ENCODE measurements at regions of chr4 and their contacts with region 1.

Region 1: DNA sequence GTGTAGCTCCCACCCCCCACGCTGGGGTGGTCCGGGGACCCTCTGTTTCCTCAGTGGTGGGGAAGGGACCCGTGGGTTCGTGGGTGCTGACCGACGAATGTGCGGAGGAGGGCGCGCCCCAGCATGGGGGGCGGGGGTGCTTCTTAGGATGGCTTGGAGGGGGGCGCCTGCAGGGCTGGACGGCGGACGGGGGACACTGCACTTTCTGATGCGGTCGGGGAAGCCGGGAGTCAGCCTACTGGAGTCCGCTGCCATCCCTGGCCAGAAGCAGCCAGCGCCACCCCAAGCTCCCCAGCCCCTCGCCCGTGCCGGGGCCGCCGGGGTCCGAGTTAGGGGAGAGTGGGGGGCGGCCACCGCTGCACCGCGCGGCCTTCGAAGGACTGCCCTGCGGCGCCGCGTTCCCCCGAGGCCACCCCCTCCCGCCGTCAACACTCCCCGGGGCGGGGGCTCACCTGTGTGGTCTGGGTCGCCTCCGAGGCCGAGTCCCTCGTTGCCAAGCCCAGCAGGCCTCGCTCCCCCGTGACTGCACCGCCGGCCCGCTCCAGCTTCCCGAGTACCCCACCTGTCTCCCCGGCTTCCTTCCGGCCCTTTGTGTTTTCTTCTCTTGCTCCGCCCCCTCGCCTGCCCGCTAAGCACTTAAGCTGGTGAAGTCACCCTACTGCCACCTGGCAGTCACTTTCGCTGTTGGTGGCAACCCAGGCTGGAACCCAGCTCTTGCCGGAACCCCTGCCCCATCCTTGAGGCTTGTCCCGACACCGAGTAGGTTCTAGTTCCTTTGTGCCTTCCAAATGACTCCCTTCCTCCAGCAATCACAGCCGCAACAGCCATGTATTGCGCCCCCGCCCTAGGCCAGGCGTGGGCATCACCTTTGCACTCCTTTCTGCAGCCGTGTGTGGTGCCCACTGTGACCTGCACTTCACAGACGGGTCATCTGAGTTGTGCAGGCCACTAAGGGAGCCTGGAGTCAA is at the start of gene OCIAD2:
- DNase-seq: peak; percentile 59 to 88 (median 86)
- ATAC-seq: peak; percentile 97
- H3K4me3 ChIP-seq: peak within 1 kb of the TSS; percentile 80
- H3K4me3 Mint-ChIP-seq: peak within 1 kb of the TSS; percentile 93 to 99 (median 97)
- H3K27ac ChIP-seq: peak within 1 kb of the TSS; percentile 82
- H3K27ac Mint-ChIP-seq: peak within 1 kb of the TSS; percentile 89 to 99 (median 96)
- H3K4me1 ChIP-seq: peaks cover 18 to 33% of the 10 kb centered on the region in 2 donors
- H3K4me1 Mint-ChIP-seq: peaks cover 32 to 63% (median 52%) of the 10 kb centered on the region in 7 donors
- H3K27me3 ChIP-seq: no peaks in the 10 kb centered on the region
- H3K27me3 Mint-ChIP-seq: no peaks in the 10 kb centered on the region
- total RNA-seq, gene OCIAD2: 42.0 to 142 (median 97.5) TPM

Region 2: DNA sequence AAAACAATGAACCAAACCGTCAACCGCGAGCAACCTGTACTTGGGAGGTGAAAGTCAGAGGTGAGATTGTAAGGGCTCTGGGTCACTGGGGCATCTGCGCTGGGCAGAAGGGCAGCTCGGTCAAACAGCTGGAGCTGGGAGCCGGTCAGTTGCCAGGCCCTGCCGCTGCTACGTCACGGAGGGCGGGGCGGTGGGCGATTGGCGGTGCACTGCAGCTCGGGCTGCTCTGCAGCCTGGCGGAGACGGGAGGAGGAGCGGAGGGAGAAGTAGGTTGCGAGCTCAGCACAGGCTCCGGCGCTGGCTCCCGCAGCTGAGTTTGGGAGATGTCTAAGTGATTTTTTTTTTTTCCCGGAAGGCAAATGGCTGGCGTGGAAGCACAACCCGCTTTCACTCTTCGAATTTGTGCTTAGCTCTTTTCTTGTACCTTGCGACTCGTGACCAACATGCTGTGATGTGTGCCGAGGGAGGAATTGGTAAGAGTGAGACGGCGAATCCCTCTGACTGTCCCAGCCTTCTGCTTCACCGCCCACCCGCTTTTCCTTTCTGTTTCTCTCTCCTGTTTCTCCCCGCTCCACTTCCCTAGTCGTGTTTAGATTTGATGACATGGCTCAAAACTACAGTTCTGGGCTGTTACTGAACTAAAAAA is 1421.3 kb before region 1 on chr4 and contains the start of gene ATP10D:
- CTCF ChIA-PET with region 1: no interaction called
- POLR2A ChIA-PET with region 1: no interaction called
- intact Hi-C with region 1: loop called in 1 of 2 experiments (anchors 10 kb)
- DNase-seq: peak; percentile 56 to 77 (median 66)
- ATAC-seq: peak; percentile 97
- H3K4me3 ChIP-seq: peak within 1 kb of the TSS; percentile 75
- H3K4me3 Mint-ChIP-seq: peak within 1 kb of the TSS; percentile 87 to 98 (median 94)
- H3K27ac ChIP-seq: peak within 1 kb of the TSS; percentile 70
- H3K27ac Mint-ChIP-seq: peak within 1 kb of the TSS; percentile 78 to 97 (median 89)
- H3K4me1 ChIP-seq: peaks cover 7 to 9% of the 10 kb centered on the region in 2 donors
- H3K4me1 Mint-ChIP-seq: peaks cover 15 to 36% (median 26%) of the 10 kb centered on the region in 7 donors
- H3K27me3 ChIP-seq: no peaks in the 10 kb centered on the region
- H3K27me3 Mint-ChIP-seq: peaks cover 0 to 5% (median 0%) of the 10 kb centered on the region in 5 donors
- total RNA-seq, gene ATP10D: 3.3 to 29.0 (median 6.1) TPM

Region 3: DNA sequence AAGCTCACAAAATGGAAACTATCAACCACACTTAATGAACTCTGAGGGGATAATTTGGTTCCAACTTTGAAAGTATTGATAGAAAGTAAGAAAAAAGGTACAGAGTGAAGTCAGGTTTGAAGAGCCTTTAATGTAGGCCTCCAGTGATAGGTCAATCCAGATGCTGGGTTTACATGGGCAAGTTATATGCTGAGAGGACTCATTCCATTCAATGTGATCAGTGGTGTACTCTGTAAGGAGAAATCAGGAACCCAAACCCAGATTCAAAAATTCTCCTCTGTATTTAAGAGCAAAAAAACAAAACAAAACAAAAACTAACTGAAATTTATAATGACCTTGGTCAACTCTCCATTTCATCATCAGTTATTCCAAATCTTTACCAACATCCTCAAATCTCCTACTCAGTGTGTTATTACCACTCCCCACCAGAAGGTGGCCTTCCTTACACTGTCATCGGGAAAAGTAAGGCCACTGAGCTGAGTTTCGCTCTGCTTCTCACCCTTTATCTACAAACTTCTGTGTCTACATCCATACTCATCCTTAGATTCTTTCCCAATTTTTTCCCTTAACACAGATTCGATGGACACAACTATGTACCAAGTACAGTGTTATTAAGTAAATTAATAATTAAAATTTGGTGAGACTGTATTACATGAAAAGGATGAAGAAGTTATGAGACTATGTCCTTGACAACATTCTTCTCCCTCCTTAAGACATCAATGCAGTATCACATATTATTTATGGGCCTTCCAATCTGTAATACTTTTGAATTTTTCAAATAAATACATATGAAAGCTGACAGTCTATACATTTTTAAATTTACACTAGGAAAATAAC is 328.1 kb before region 1 on chr4:
- CTCF ChIA-PET with region 1: interaction called, 14 read pairs
- POLR2A ChIA-PET with region 1: interaction called, 3 read pairs
- intact Hi-C with region 1: loop called (anchors 1 kb)
- DNase-seq: peak in 8 of 9 donors; percentile 29 to 66 (median 50)
- ATAC-seq: peak; percentile 95
- H3K4me3 ChIP-seq: no peak overlapping the region
- H3K4me3 Mint-ChIP-seq: no peak overlapping the region
- H3K27ac ChIP-seq: no peak overlapping the region
- H3K27ac Mint-ChIP-seq: peak overlapping the region in 6 of 9 donors; percentile 28 to 79 (median 52)
- H3K4me1 ChIP-seq: no peaks in the 10 kb centered on the region
- H3K4me1 Mint-ChIP-seq: peaks cover 0 to 7% (median 0%) of the 10 kb centered on the region in 7 donors
- H3K27me3 ChIP-seq: no peaks in the 10 kb centered on the region
- H3K27me3 Mint-ChIP-seq: no peaks in the 10 kb centered on the region

Region 4: DNA sequence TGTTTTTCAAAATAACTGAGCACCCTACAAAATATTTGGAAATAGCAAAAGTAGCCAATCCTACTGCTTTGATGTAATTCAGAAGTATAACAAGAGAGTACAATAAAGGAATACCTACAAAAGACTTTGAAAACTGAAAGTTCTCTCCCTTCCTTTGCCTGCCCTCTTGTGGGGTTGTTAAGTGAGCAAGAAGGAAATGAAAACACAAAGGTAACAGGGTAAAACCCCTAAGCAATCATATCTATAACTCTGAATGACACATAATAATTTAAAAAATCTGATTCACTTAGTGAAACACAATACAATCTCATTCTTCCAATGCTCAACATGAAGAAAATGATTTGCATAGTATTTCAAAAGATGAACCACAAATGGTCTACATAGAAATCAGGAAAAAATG is 224.6 kb before region 1 on chr4:
- CTCF ChIA-PET with region 1: no interaction called
- POLR2A ChIA-PET with region 1: no interaction called
- intact Hi-C with region 1: loop called in 1 of 2 experiments (anchors 5 kb)
- DNase-seq: peak in 6 of 9 donors; percentile 4 to 43 (median 25)
- ATAC-seq: peak; percentile 70
- H3K4me3 ChIP-seq: no peak overlapping the region
- H3K4me3 Mint-ChIP-seq: peak overlapping the region in 1 of 10 donors; percentile 26
- H3K27ac ChIP-seq: no peak overlapping the region
- H3K27ac Mint-ChIP-seq: peak overlapping the region in 7 of 9 donors; percentile 35 to 86 (median 69)
- H3K4me1 ChIP-seq: peaks cover 4 to 9% of the 10 kb centered on the region in 2 donors
- H3K4me1 Mint-ChIP-seq: peaks cover 22 to 52% (median 45%) of the 10 kb centered on the region in 7 donors
- H3K27me3 ChIP-seq: no peaks in the 10 kb centered on the region
- H3K27me3 Mint-ChIP-seq: no peaks in the 10 kb centered on the region

Region 5: DNA sequence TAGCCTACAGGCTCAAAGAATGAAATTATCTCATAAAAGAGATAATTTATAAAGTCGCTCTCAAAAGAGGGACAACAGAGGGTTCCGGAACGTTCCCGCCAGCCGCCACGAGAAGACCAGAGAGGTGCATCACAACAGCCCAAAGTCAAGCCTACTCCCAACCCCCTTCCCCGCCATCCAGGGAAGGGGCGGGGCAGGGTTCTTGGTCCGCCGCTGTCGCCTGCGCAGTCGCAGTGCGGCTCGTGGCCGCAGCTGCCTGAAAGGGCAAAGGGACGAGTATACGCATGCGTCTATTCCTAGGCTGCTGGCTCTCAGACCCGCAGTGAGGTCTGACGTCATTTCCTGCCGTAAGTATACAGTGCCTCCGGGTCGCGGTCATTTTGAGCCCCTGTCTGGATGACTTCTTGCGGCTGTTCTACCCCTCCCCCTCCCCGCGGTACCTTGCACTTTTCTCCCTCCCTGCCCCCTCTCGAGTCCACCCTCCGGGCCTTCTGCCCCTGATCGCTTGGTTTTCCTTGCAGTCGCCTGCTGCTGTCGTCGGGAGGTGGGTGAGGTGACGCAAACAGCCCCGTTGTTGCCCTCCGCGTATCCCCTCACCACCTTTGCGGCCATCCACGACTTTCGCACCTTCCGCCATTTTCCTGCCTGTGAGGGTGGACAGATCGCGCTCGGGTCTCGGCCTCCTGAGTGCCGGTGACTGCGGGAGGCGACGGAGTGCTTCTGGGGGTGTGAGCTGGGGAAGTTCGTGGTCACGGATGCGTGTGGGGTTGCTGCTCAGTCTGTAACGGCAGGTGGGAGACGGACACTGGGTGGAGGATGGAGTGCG is 75.6 kb before region 1 on chr4 and contains the start of gene OCIAD1:
- CTCF ChIA-PET with region 1: interaction called, 3 read pairs
- POLR2A ChIA-PET with region 1: interaction called, 6 read pairs
- intact Hi-C with region 1: loop called (anchors 1 kb)
- DNase-seq: peak; percentile 80 to 98 (median 93)
- ATAC-seq: peak; percentile 98
- H3K4me3 ChIP-seq: peak within 1 kb of the TSS; percentile 98
- H3K4me3 Mint-ChIP-seq: peak within 1 kb of the TSS; percentile 96 to 100 (median 100)
- H3K27ac ChIP-seq: peak within 1 kb of the TSS; percentile 91
- H3K27ac Mint-ChIP-seq: peak within 1 kb of the TSS; percentile 98 to 100 (median 100)
- H3K4me1 ChIP-seq: peaks cover 10 to 12% of the 10 kb centered on the region in 2 donors
- H3K4me1 Mint-ChIP-seq: peaks cover 10 to 44% (median 36%) of the 10 kb centered on the region in 7 donors
- H3K27me3 ChIP-seq: no peaks in the 10 kb centered on the region
- H3K27me3 Mint-ChIP-seq: peaks cover 0 to 4% (median 4%) of the 10 kb centered on the region in 5 donors
- total RNA-seq, gene OCIAD1: 85.6 to 128 (median 102) TPM

Region 6: GRCh38 chr4:48944756-48945241 is 38.3 kb after region 1 on chr4:
- CTCF ChIA-PET with region 1: interaction called, 10 read pairs
- POLR2A ChIA-PET with region 1: interaction called, 9 read pairs
- intact Hi-C with region 1: loop called in 1 of 2 experiments (anchors 5 kb)
- DNase-seq: peak in 8 of 9 donors; percentile 34 to 73 (median 60)
- ATAC-seq: peak; percentile 89
- H3K4me3 ChIP-seq: peak overlapping the region; percentile 25
- H3K4me3 Mint-ChIP-seq: peak overlapping the region in 9 of 10 donors; percentile 13 to 76 (median 68)
- H3K27ac ChIP-seq: no peak overlapping the region
- H3K27ac Mint-ChIP-seq: peak overlapping the region in 7 of 9 donors; percentile 27 to 88 (median 62)
- H3K4me1 ChIP-seq: peaks cover 0 to 18% of the 10 kb centered on the region in 2 donors
- H3K4me1 Mint-ChIP-seq: peaks cover 6 to 57% (median 40%) of the 10 kb centered on the region in 7 donors
- H3K27me3 ChIP-seq: no peaks in the 10 kb centered on the region
- H3K27me3 Mint-ChIP-seq: peaks cover 0 to 18% (median 0%) of the 10 kb centered on the region in 5 donors